ENCODE measurements at regions of chr10 and their contacts with region 1.

Region 1: DNA sequence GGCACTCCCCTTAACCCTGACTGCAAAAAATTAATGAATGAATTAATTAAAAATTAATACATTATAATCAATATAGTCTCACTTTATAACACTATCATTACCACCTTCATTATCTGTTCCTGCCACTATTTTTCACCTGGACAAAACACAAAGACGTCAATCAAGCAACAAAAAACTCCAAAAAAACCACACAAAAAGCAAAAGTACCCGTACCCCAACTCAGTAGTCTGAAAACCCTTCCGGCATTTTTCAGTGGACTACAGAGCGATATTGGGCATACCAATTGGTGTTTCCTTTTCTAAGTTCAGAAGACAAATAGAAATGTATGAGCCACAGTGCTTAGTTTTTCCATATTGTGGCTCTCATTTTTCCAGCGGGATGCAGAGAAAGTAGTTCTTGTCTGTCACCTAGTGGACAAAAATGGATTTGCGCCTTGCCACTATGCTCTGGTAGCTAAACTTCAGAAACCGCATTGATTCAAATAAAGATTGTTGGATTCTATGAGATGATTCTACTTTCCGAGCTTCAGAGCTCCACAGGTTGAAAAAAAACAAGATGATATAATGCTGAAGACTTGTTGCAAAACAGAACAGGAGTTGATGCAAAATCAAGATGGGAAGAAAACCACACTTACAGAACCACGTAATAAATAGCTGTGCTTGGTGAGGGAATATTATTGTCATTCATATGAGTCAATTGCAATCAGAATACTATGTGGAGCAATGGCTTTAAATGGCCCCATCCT is 50.6 kb upstream of the ITGB1 start:
- DNase-seq: no peak
- H3K4me3 ChIP-seq: no peak overlapping the region
- H3K27ac ChIP-seq: no peak overlapping the region
- H3K4me1 ChIP-seq: peaks cover 32% of the 10 kb centered on the region
- H3K27me3 ChIP-seq: no peaks in the 10 kb centered on the region
- CTCF ChIP-seq: peak; percentile 76 to 95 (median 77)
- POLR2A ChIP-seq: no peak

Region 2: DNA sequence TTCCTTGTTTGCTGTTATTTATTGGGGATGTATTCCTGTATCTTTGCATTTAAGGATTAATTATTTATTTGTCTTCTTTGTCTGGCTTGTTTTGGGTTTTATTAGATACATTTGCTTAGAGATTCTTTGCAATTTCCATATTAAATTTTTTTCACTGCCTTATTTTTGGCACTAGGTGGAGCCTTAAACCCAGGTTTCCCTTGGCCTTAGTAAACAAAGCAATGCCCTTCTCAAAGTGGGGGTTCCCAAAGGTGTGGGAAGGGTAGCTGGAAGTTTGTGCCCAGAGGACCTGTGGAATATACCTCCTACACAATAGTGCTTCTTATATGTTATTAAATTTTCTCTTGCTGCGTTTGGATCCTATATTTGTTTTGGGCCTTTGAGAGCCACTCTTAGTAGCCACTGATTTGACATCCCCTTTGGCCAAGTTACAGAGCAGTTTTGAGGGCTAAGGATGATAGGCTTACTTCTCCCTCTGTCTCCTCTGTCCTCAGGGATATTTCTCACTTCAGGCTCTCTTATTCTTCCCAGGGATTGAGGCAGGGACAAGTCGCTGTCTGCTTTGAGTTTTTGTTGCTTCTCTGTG is 213.0 kb before region 1 on chr10:
- intact Hi-C with region 1: loop called (anchors 2 kb)
- DNase-seq: no peak
- H3K4me3 ChIP-seq: no peak overlapping the region
- H3K27ac ChIP-seq: no peak overlapping the region
- H3K4me1 ChIP-seq: no peaks in the 10 kb centered on the region
- H3K27me3 ChIP-seq: no peaks in the 10 kb centered on the region
- CTCF ChIP-seq: peak; percentile 48 to 61 (median 53)
- POLR2A ChIP-seq: no peak

Region 3: GRCh38 chr10:32958085-32959005 is 50.3 kb before region 1 on chr10 and contains the start of gene ITGB1:
- intact Hi-C with region 1: loop called (anchors 2 kb)
- DNase-seq: peak in 1 of 2 donors; percentile 96
- H3K4me3 ChIP-seq: peak within 1 kb of the TSS; percentile 86 to 100
- H3K27ac ChIP-seq: peak within 1 kb of the TSS; percentile 92
- H3K4me1 ChIP-seq: peaks cover 67% of the 10 kb centered on the region
- H3K27me3 ChIP-seq: no peaks in the 10 kb centered on the region
- CTCF ChIP-seq: no peak
- POLR2A ChIP-seq: peak in 1 of 2 donors; percentile 83
- total RNA-seq, gene ITGB1: 193 TPM

Measured in vagina (tissue), 2 donors.